AG04450 (cell line): ENCODE measurements at regions of chr9 and their contacts with region 1.

Region 1: GRCh38 chr9:131317011-131317422 is 27.5 kb downstream of the PLPP7 start:
- DNase-seq: no peak
- H3K4me3 ChIP-seq: no peak overlapping the region
- H3K27ac ChIP-seq: no peak overlapping the region
- H3K27me3 ChIP-seq: peaks cover 10% of the 10 kb centered on the region
- CTCF ChIP-seq: no peak

Region 2: DNA sequence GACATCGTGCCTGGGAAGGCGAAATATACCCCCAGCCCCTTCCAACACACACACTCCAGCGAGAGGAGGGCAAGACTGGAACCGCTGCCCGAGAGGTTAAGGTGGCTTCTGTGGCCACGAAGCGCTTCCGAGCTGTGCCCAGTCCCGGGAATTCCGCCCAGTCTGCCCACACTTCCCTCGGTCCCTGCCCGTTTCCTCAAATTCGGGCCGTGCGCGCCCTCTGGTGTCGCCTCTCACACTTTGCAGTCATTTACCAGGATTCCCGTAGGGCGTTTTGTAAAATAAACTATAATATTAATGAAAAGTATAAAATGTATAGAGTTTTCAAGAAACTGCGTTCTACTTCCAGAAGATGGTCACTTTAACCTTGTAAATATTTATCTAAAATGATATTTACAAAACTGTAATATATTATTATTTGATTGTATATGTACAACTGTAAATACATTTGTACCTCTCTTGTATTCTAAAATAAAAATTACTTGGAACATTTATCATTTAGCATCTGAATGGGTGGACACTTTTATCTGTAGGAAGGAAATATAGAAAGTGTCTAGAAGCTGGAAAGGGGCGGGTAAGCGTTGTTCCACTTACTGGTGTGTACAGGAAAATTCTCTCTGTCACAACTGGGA is 634.4 kb before region 1 on chr9:
- CTCF ChIA-PET with region 1: no interaction called
- POLR2A ChIA-PET with region 1: no interaction called
- DNase-seq: no peak
- H3K4me3 ChIP-seq: peak overlapping the region; percentile 36
- H3K27ac ChIP-seq: no peak overlapping the region
- H3K27me3 ChIP-seq: peaks cover 19% of the 10 kb centered on the region
- CTCF ChIP-seq: peak; percentile 86

Region 3: GRCh38 chr9:131289301-131290038 is 27.5 kb before region 1 on chr9 and contains the start of gene PLPP7:
- CTCF ChIA-PET with region 1: no interaction called
- POLR2A ChIA-PET with region 1: interaction called, 11 read pairs
- DNase-seq: no peak
- H3K4me3 ChIP-seq: no peak within 1 kb of the TSS
- H3K27ac ChIP-seq: no peak within 1 kb of the TSS
- H3K27me3 ChIP-seq: peaks cover under 1% of the 10 kb centered on the region
- CTCF ChIP-seq: no peak
- polyA plus RNA-seq, gene PLPP7: 0.57 and 0.76 TPM in 2 replicates